Right ventricle myocardium inferior (tissue), 1 donor: ENCODE measurements at regions of chr10 and their contacts with region 1.

Region 1: GRCh38 chr10:62437696-62438095 is 63.5 kb downstream of the ZNF365 start:
- DNase-seq: no peak
- ATAC-seq: no peak

Region 2: GRCh38 chr10:62323751-62324150 is 113.9 kb before region 1 on chr10:
- intact Hi-C with region 1: no loop called
- DNase-seq: no peak
- ATAC-seq: no peak

Region 3: DNA sequence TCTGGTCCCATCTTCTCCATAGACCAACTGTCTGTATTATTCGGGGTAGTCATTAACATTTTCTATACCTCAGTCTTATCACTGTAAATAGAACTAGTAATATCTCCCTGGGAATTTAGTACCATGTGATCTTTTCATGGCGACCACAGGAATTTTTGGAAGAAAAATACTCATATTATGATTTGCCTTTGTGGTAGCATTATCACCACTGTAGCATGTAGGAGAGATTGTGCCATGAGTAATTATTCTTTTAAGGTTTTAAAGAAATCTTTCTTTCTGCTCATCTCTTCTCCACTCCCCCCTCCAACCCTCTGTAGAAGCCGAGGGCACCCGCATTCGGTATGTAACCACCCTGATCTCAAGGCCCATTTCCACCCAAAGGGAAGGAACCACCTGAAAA is 38.5 kb before region 1 on chr10:
- intact Hi-C with region 1: no loop called
- DNase-seq: no peak
- ATAC-seq: no peak

Region 4: DNA sequence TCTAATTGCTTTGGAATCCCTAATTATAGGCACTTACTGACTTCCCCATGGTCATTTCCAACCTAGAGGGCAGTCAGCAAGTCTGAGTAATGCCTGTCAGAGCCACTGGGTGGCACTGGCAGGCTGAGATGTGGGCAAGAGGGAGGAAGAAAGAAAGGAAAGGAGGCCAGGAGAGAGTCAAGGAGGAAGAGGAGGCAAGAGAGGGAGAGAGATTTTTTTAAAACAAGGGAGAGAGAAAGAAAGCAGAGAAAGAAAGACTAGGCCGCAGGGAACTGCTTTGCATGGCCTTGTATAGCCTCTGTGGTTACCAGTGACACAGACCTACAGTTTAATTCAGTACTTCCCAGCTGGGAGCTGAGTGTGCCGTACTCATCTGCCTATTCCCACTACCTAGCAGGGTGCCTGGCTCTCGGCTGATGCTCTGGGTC is 156.4 kb after region 1 on chr10:
- intact Hi-C with region 1: loop called (anchors 5 kb)
- DNase-seq: no peak
- ATAC-seq: peak; percentile 89